Gastrocnemius medialis (tissue), 4 donors: ENCODE measurements at regions of chr1 and their contacts with region 1.

Region 1: GRCh38 chr1:112619520-112620376 is at the start of gene CAPZA1:
- DNase-seq: peak; percentile 86 to 90
- ATAC-seq: peak; percentile 94
- H3K4me3 ChIP-seq: peak within 1 kb of the TSS; percentile 79 to 100 (median 95)
- H3K27ac ChIP-seq: peak within 1 kb of the TSS; percentile 97 to 99 (median 98)
- H3K4me1 ChIP-seq: peaks cover 33 to 42% of the 10 kb centered on the region in 2 donors
- H3K27me3 ChIP-seq: no peaks in the 10 kb centered on the region
- CTCF ChIP-seq: no peak
- POLR2A ChIP-seq: peak; percentile 85 to 94
- total RNA-seq, gene CAPZA1: 27.1 to 58.1 (median 35.2) TPM

Region 2: GRCh38 chr1:112390775-112391602 is 228.8 kb before region 1 on chr1:
- in situ Hi-C with region 1: loop called in 1 of 4 experiments (anchors 10 kb)
- intact Hi-C with region 1: no loop called
- DNase-seq: peak; percentile 70 to 84
- ATAC-seq: peak; percentile 92
- H3K4me3 ChIP-seq: peak overlapping the region; percentile 39 to 64 (median 49)
- H3K27ac ChIP-seq: peak overlapping the region; percentile 58 to 91 (median 80)
- H3K4me1 ChIP-seq: peaks cover 20% of the 10 kb centered on the region in 2 donors
- H3K27me3 ChIP-seq: no peaks in the 10 kb centered on the region
- CTCF ChIP-seq: peak; percentile 88 to 93 (median 91)
- POLR2A ChIP-seq: peak in 1 of 2 donors; percentile 22

Region 3: GRCh38 chr1:112706908-112707663 is 87.3 kb after region 1 on chr1 and contains the start of gene RHOC:
- in situ Hi-C with region 1: loop called (anchors 5 to 10 kb)
- intact Hi-C with region 1: loop called (anchors 2 kb)
- DNase-seq: peak; percentile 70 to 86
- ATAC-seq: peak; percentile 83 to 86
- H3K4me3 ChIP-seq: peak within 1 kb of the TSS; percentile 82 to 87 (median 84)
- H3K27ac ChIP-seq: peak within 1 kb of the TSS; percentile 85 to 94 (median 90)
- H3K4me1 ChIP-seq: peaks cover 16 to 17% of the 10 kb centered on the region in 2 donors
- H3K27me3 ChIP-seq: no peaks in the 10 kb centered on the region
- CTCF ChIP-seq: peak; percentile 87 to 97 (median 95)
- POLR2A ChIP-seq: peak; percentile 85 to 87
- total RNA-seq, gene RHOC: 33.1 to 86.5 (median 64.3) TPM

Region 4: GRCh38 chr1:112803906-112804762 is 184.4 kb after region 1 on chr1:
- in situ Hi-C with region 1: no loop called
- intact Hi-C with region 1: loop called (anchors 10 kb)
- DNase-seq: peak; percentile 52 to 63
- ATAC-seq: peak; percentile 50 to 65
- H3K4me3 ChIP-seq: no peak overlapping the region
- H3K27ac ChIP-seq: no peak overlapping the region
- H3K4me1 ChIP-seq: peaks cover 12 to 19% of the 10 kb centered on the region in 2 donors
- H3K27me3 ChIP-seq: no peaks in the 10 kb centered on the region
- CTCF ChIP-seq: peak; percentile 64 to 84 (median 79)
- POLR2A ChIP-seq: no peak

Region 5: GRCh38 chr1:113928941-113929749 is 1309.4 kb after region 1 on chr1 and contains the start of gene HIPK1:
- in situ Hi-C with region 1: loop called in 1 of 4 experiments (anchors 25 kb)
- intact Hi-C with region 1: loop called (anchors 5 kb)
- DNase-seq: peak; percentile 86 to 88
- ATAC-seq: peak; percentile 88 to 89
- H3K4me3 ChIP-seq: peak within 1 kb of the TSS; percentile 86 to 98 (median 90)
- H3K27ac ChIP-seq: peak within 1 kb of the TSS; percentile 92 to 98 (median 94)
- H3K4me1 ChIP-seq: peaks cover 45% of the 10 kb centered on the region in 2 donors
- H3K27me3 ChIP-seq: no peaks in the 10 kb centered on the region
- CTCF ChIP-seq: peak in 1 of 5 experiments; percentile 28
- POLR2A ChIP-seq: peak; percentile 79 to 82
- total RNA-seq, gene HIPK1: 54.4 to 67.6 (median 60.0) TPM